ENCODE measurements at regions of chr22 and their contacts with region 1.

Region 1: GRCh38 chr22:39170825-39171622 is 18.5 kb upstream of the CBX7 start:
- DNase-seq: peak; percentile 76
- H3K4me3 Mint-ChIP-seq: no peak overlapping the region
- H3K27ac Mint-ChIP-seq: no peak overlapping the region
- H3K4me1 Mint-ChIP-seq: peaks cover 36% of the 10 kb centered on the region
- H3K27me3 Mint-ChIP-seq: no peaks in the 10 kb centered on the region
- CTCF ChIP-seq: peak; percentile 96

Region 2: GRCh38 chr22:39039306-39040126 is 131.5 kb before region 1 on chr22:
- CTCF ChIA-PET with region 1: no interaction called
- POLR2A ChIA-PET with region 1: no interaction called
- intact Hi-C with region 1: no loop called
- DNase-seq: no peak
- H3K4me3 Mint-ChIP-seq: peak overlapping the region; percentile 40
- H3K27ac Mint-ChIP-seq: no peak overlapping the region
- H3K4me1 Mint-ChIP-seq: no peaks in the 10 kb centered on the region
- H3K27me3 Mint-ChIP-seq: no peaks in the 10 kb centered on the region
- CTCF ChIP-seq: no peak

Region 3: DNA sequence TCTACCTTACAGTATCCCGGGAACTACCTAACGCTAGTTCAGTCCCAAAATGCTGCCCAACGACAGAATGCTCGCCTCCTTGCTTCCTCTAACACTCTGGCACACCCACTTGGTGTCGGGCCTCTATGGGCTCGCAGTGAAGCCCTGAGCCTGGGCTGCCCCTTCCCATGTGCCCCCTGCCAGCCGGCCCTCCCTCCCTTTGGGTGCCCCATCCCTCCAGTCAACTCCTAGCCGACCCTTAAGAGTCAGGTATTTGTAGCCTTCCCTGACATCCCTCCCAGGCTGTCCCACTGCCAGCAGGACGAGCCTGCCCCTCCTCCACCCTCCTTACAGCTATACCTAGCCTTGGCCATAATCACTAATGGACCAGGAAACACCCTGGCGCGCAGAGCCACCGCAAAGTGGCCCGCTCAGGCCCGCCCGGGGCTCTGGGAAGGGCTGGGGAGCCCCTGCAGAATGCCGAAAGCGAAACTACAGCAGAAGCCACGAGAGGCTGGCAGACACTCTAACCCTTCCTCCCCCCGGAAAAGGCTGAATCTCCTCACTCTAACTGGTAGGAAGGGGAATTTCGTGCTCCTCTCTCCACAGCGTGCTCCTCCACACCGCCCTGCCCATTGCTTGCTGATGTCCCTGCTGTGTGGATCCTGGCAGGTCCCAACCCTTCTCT is 26.8 kb before region 1 on chr22:
- CTCF ChIA-PET with region 1: no interaction called
- POLR2A ChIA-PET with region 1: no interaction called
- intact Hi-C with region 1: no loop called
- DNase-seq: peak; percentile 14
- H3K4me3 Mint-ChIP-seq: peak overlapping the region; percentile 72
- H3K27ac Mint-ChIP-seq: no peak overlapping the region
- H3K4me1 Mint-ChIP-seq: no peaks in the 10 kb centered on the region
- H3K27me3 Mint-ChIP-seq: no peaks in the 10 kb centered on the region
- CTCF ChIP-seq: no peak

Region 4: DNA sequence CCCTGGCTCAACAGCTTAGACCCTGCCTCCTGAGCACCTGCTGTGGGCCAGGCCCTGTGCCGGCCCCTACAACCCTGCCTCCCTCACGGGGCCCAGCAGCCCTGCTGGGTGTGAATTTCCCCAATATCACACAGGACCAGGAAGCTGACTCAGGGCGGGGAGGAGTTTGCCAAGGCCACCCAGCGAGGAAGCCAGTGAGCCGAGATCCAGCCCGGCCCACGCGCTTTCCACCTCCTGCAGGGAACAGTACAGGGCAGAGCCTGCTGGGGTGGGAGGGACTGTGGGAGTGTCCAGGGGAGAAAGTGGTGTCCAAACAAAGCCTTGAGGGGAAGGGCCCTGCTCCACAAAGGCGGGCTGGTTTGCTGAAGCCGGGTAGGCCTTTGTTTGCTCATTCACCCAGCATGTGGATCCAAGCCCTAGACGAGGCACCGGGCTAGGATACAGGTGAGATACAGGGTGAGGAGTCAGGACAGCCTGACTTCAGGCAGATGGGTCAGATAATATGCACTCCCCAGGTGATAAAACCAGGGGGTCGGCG is 121.6 kb after region 1 on chr22:
- CTCF ChIA-PET with region 1: no interaction called
- POLR2A ChIA-PET with region 1: no interaction called
- intact Hi-C with region 1: loop called (anchors 5 kb)
- DNase-seq: peak; percentile 96
- H3K4me3 Mint-ChIP-seq: peak overlapping the region; percentile 38
- H3K27ac Mint-ChIP-seq: peak overlapping the region; percentile 75
- H3K4me1 Mint-ChIP-seq: peaks cover 15% of the 10 kb centered on the region
- H3K27me3 Mint-ChIP-seq: no peaks in the 10 kb centered on the region
- CTCF ChIP-seq: no peak